ENCODE measurements at regions of chr2 and their contacts with region 1.

Region 1: GRCh38 chr2:72993147-72993932 is 76.0 kb downstream of the EMX1 start:
- DNase-seq: peak in 1 of 2 donors; percentile 83
- H3K4me3 ChIP-seq: no peak overlapping the region
- H3K27ac ChIP-seq: no peak overlapping the region
- H3K4me1 ChIP-seq: no peaks in the 10 kb centered on the region
- H3K27me3 ChIP-seq: no peaks in the 10 kb centered on the region
- CTCF ChIP-seq: peak; percentile 39 to 87 (median 63)
- POLR2A ChIP-seq: no peak

Region 2: GRCh38 chr2:73163483-73164367 is 170.4 kb after region 1 on chr2:
- intact Hi-C with region 1: loop called (anchors 5 kb)
- DNase-seq: peak in 1 of 2 donors; percentile 85
- H3K4me3 ChIP-seq: no peak overlapping the region
- H3K27ac ChIP-seq: no peak overlapping the region
- H3K4me1 ChIP-seq: no peaks in the 10 kb centered on the region
- H3K27me3 ChIP-seq: no peaks in the 10 kb centered on the region
- CTCF ChIP-seq: peak; percentile 74 to 91 (median 75)
- POLR2A ChIP-seq: no peak

Region 3: DNA sequence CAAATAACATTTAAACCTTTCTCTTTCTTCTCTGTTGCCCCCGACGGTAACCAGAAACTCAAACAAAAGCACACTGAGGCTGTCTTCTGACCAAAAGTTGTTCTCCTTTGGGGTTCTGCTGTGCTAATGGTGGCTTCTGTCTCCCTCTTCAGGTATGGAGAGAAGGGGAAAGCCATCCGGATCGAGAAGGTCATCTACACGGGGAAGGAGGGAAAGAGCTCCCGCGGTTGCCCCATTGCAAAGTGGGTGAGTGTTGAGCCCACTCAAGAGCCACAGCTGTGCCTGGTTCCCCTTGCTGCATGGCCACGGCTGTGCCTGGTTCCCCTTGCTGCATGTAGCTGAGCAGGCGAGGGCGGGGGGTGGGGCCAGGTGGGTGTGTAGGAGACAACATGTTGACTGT is 1087.0 kb after region 1 on chr2:
- intact Hi-C with region 1: no loop called
- DNase-seq: no peak
- H3K4me3 ChIP-seq: no peak overlapping the region
- H3K27ac ChIP-seq: no peak overlapping the region
- H3K4me1 ChIP-seq: no peaks in the 10 kb centered on the region
- H3K27me3 ChIP-seq: no peaks in the 10 kb centered on the region
- CTCF ChIP-seq: no peak
- POLR2A ChIP-seq: no peak